PC-3 (cell line): ENCODE measurements at regions of chr5 and their contacts with region 1.

Region 1: DNA sequence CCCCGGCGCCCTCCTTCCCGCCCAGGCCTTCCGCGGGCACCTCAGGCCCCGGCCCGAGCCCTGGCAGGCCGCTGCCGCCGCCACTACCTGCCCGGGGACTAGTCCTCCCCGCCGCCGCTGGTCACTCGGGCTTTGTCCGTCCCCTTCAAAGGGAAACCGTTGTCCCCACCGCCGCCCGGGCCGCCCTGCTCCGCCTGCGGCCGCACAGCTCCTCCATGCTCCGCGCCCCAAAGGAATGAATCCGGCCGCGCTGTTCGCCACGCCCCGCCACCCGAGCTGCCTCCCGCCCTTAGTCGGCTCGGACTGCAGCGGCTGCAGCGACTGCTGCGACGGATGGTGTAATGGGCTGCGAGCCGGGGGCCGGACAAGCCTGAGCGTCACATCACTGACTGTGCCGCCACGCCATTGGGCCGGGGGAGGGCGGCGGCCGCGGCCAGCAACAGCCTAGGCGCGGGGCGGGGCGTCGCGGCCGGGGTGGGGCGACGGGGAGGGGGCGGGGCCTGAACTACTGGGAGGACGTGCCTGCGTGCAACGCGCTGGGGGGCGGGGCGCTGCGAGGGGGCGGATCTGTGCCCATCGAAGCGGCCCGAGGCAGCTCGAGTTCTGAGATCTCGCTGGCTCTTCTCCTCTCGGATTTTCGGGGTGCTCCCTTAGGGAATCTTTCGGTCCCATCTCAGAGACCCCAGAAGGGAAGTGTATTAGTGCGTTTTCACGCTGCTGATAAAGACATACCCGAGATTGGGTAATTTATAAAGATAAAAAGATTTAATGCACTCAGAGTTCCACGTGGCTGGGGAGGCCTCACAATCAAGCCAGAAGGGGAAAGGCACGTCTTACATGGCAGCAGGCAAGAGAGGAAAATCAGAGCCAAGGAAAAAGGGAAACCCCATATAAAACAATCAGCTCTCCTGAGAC is at the start of gene FEM1C:
- DNase-seq: peak; percentile 95
- ATAC-seq: peak; percentile 95
- H3K4me3 ChIP-seq: peak within 1 kb of the TSS; percentile 79
- H3K27ac ChIP-seq: peak within 1 kb of the TSS; percentile 69
- H3K4me1 ChIP-seq: peaks cover 16% of the 10 kb centered on the region; the same call in 1 of the 2 replicates
- H3K27me3 ChIP-seq: no peaks in the 10 kb centered on the region
- CTCF ChIP-seq: no peak
- total RNA-seq, gene FEM1C: 8.4 and 9.1 TPM in 2 replicates

Region 2: DNA sequence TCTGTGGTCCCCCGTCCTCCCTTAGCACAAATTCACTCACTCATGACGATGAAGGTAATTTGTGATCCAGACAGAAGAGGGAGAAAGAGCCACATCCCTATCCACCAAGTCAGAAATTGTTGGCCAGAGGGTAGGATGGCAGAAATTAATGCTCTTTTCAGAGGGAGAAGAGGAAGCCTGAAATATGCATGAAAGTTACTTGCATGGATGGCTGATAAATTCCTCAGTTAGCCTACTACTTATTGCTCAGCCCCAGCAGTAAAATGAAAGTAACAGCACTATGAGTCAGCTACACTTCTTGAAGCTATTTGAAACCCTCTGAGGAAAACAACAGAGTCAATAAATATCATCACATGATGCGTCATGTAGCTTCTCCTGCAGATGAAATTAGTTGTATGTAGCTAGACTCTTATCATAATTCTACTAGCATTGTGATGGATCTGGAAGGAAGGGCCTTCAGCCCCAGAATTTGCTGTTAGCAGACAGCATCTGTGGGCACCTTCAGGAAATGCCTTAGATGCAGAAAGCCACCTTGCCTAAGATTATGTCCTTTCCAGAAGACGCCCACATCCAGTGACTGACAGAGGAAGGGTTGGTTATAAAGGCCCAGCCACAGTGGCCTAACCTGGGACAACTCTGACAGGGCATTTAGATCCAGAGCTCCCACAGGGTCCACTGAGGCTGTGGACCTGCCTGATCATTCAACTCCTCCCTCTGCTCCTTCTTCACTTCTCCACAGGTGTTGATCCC is 167.1 kb before region 1 on chr5:
- CTCF ChIA-PET with region 1: no interaction called
- POLR2A ChIA-PET with region 1: no interaction called
- intact Hi-C with region 1: loop called (anchors 5 kb)
- DNase-seq: peak; percentile 86
- ATAC-seq: peak; percentile 88
- H3K4me3 ChIP-seq: peak overlapping the region; percentile 9; the same call in 1 of the 2 replicates
- H3K27ac ChIP-seq: peak overlapping the region; percentile 41
- H3K4me1 ChIP-seq: peaks cover 29% of the 10 kb centered on the region
- H3K27me3 ChIP-seq: no peaks in the 10 kb centered on the region
- CTCF ChIP-seq: peak; percentile 28; the same call in 1 of the 2 replicates

Region 3: GRCh38 chr5:115487756-115488155 is 56.9 kb before region 1 on chr5:
- CTCF ChIA-PET with region 1: no interaction called
- POLR2A ChIA-PET with region 1: no interaction called
- intact Hi-C with region 1: no loop called
- DNase-seq: no peak
- ATAC-seq: no peak
- H3K4me3 ChIP-seq: no peak overlapping the region
- H3K27ac ChIP-seq: no peak overlapping the region
- H3K4me1 ChIP-seq: no peaks in the 10 kb centered on the region
- H3K27me3 ChIP-seq: no peaks in the 10 kb centered on the region
- CTCF ChIP-seq: no peak

Region 4: DNA sequence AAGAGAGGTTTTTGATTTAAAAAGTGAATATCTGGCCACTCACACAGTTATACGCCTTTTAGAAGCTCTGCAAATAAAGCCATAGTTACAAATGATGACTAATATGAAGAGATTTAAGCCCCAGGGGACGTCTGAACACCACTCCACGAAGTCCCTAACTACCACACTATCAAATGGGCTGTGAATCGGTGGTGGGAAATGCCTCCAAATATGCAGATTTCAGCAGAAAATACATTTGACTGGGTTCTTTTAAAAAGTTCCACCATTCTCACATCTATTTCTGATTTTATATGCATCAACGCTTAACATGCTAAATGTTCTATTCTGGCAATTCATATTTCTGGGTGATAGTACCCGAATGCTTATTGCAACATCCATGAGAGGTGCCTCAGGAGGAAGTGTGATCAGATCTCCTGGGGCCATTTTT is 35.1 kb after region 1 on chr5:
- CTCF ChIA-PET with region 1: interaction called, 4 read pairs
- POLR2A ChIA-PET with region 1: no interaction called
- intact Hi-C with region 1: loop called (anchors 2 kb)
- DNase-seq: peak; percentile 71
- ATAC-seq: peak; percentile 89
- H3K4me3 ChIP-seq: no peak overlapping the region
- H3K27ac ChIP-seq: peak overlapping the region; percentile 21; the same call in 1 of the 2 replicates
- H3K4me1 ChIP-seq: peaks cover 42% of the 10 kb centered on the region
- H3K27me3 ChIP-seq: no peaks in the 10 kb centered on the region
- CTCF ChIP-seq: no peak

Region 5: DNA sequence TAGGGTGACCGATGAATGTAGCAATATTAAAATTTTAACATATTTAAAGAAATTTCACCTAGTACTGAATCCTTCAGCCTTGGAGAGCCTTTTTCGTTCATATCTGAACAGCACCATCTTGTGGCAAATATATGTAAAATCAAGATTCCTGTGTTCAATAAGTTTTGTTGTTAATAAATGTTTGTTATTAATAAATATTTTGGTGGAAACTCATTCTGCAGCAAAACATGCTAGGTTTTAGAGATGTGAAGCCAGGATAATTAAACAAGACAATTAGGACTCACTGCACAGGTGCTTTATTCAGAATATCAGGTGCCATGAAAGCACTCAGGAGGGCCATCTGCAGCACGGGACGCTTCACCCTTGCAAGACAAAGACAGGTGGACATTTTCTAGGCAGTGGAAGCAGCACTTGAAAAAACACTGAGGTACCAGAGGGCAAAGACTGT is 41.9 kb after region 1 on chr5:
- CTCF ChIA-PET with region 1: no interaction called
- POLR2A ChIA-PET with region 1: no interaction called
- intact Hi-C with region 1: loop called (anchors 2 kb)
- DNase-seq: peak; percentile 53
- ATAC-seq: peak; percentile 51
- H3K4me3 ChIP-seq: no peak overlapping the region
- H3K27ac ChIP-seq: no peak overlapping the region
- H3K4me1 ChIP-seq: peaks cover 13% of the 10 kb centered on the region; the same call in 1 of the 2 replicates
- H3K27me3 ChIP-seq: no peaks in the 10 kb centered on the region
- CTCF ChIP-seq: peak; percentile 75

Region 6: GRCh38 chr5:115920171-115920725 is 375.6 kb after region 1 on chr5:
- CTCF ChIA-PET with region 1: no interaction called
- POLR2A ChIA-PET with region 1: no interaction called
- intact Hi-C with region 1: no loop called
- DNase-seq: no peak
- ATAC-seq: no peak
- H3K4me3 ChIP-seq: no peak overlapping the region
- H3K27ac ChIP-seq: no peak overlapping the region
- H3K4me1 ChIP-seq: no peaks in the 10 kb centered on the region
- H3K27me3 ChIP-seq: no peaks in the 10 kb centered on the region
- CTCF ChIP-seq: no peak